A673 (cell line): ENCODE measurements at regions of chr13 and their contacts with region 1.

Region 1: GRCh38 chr13:36981156-36981743 is 17.9 kb downstream of the ALG5 start:
- DNase-seq: peak; percentile 81
- H3K4me3 ChIP-seq: no peak overlapping the region
- H3K27ac ChIP-seq: peak overlapping the region; percentile 69
- H3K4me1 ChIP-seq: peaks cover 17% of the 10 kb centered on the region
- H3K27me3 ChIP-seq: no peaks in the 10 kb centered on the region
- CTCF ChIP-seq: peak; percentile 69

Region 2: GRCh38 chr13:36420437-36420891 is 560.8 kb before region 1 on chr13:
- CTCF ChIA-PET with region 1: no interaction called
- POLR2A ChIA-PET with region 1: no interaction called
- intact Hi-C with region 1: loop called (anchors 10 kb)
- DNase-seq: peak; percentile 92
- H3K4me3 ChIP-seq: no peak overlapping the region
- H3K27ac ChIP-seq: peak overlapping the region; percentile 31
- H3K4me1 ChIP-seq: peaks cover 39% of the 10 kb centered on the region
- H3K27me3 ChIP-seq: no peaks in the 10 kb centered on the region
- CTCF ChIP-seq: peak; percentile 92

Region 3: GRCh38 chr13:36453516-36453915 is 527.7 kb before region 1 on chr13:
- CTCF ChIA-PET with region 1: no interaction called
- POLR2A ChIA-PET with region 1: no interaction called
- intact Hi-C with region 1: loop called (anchors 10 kb)
- DNase-seq: peak; percentile 72
- H3K4me3 ChIP-seq: no peak overlapping the region
- H3K27ac ChIP-seq: peak overlapping the region; percentile 74
- H3K4me1 ChIP-seq: peaks cover 35% of the 10 kb centered on the region
- H3K27me3 ChIP-seq: no peaks in the 10 kb centered on the region
- CTCF ChIP-seq: peak; percentile 71

Region 4: GRCh38 chr13:36858290-36858689 is 123.0 kb before region 1 on chr13:
- CTCF ChIA-PET with region 1: interaction called, 27 read pairs
- POLR2A ChIA-PET with region 1: no interaction called
- intact Hi-C with region 1: loop called (anchors 1 kb)
- DNase-seq: peak; percentile 83
- H3K4me3 ChIP-seq: no peak overlapping the region
- H3K27ac ChIP-seq: no peak overlapping the region
- H3K4me1 ChIP-seq: no peaks in the 10 kb centered on the region
- H3K27me3 ChIP-seq: no peaks in the 10 kb centered on the region
- CTCF ChIP-seq: peak; percentile 67

Region 5: GRCh38 chr13:36872621-36873020 is 108.6 kb before region 1 on chr13:
- CTCF ChIA-PET with region 1: no interaction called
- POLR2A ChIA-PET with region 1: no interaction called
- intact Hi-C with region 1: no loop called
- DNase-seq: no peak
- H3K4me3 ChIP-seq: no peak overlapping the region
- H3K27ac ChIP-seq: no peak overlapping the region
- H3K4me1 ChIP-seq: peaks cover 8% of the 10 kb centered on the region
- H3K27me3 ChIP-seq: no peaks in the 10 kb centered on the region
- CTCF ChIP-seq: no peak